GM12878 (cell line): ENCODE measurements at regions of chr16 and their contacts with region 1.

Region 1: DNA sequence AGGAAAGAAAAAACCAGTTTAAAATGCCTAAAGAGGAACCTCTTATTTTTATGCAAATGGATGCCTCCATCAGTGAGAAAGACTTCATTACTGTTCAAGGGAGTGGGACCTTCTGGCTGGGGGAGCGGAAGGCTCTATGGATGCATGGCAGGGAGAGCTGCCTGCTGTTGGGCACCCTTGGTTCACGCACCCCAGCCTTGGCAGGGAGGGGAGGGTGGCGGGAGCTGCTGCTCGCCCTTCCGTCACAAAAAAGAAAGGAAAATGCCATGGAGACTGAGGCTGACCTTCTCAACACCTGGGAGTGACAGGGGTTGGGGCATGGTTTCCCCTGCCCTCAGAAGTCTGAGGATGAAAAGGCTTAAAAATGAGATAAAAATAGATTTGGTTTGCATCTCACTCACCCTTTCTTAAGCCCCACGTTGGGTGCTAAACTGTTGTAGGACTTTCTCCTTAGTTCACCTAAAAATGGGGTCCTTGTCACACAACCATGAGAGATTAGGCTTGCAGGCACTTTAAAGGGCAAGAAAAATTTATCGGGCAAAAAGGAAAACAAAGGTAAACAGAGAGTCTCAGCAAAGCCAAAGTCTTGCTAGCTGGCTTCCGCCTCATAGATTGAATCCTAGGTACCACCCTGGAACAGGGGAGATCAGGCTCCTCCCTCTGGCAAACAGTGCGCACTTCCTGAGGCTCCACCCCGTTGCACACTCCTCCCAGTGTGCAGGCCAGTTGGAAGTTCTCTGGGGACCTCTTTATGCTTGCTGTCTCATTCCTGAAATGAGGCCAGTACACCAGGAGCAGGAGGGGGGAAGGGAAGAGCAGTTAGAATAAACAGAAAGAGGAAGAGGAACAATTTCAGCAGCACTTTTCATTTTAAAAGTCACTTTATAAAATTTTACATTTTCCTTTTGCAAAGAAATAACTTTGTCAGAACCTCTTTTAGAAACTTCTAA is 31.6 kb downstream of the PHKB start:
- DNase-seq: peak; percentile 76
- ATAC-seq: peak; percentile 95
- H3K4me3 ChIP-seq: peak overlapping the region; percentile 57
- H3K27ac ChIP-seq: peak overlapping the region; percentile 97
- H3K4me1 ChIP-seq: peaks cover 29% of the 10 kb centered on the region
- H3K27me3 ChIP-seq: no peaks in the 10 kb centered on the region
- CTCF ChIP-seq: no peak
- EP300 ChIP-seq: peak; percentile 55 to 61; a peak in 3 of 4 replicates
- POLR2A ChIP-seq: peak; percentile 58
- RAD21 ChIP-seq: no peak

Region 2: GRCh38 chr16:47467496-47467895 is 25.2 kb before region 1 on chr16:
- CTCF ChIA-PET with region 1: interaction called, 60 read pairs
- POLR2A ChIA-PET with region 1: interaction called, 38 read pairs
- RAD21 ChIA-PET with region 1: interaction called, 238 read pairs
- SMC1A ChIA-PET with region 1: interaction called, 254 read pairs
- in situ Hi-C with region 1: no loop called
- intact Hi-C with region 1: loop called (anchors 1 kb)
- DNase-seq: no peak
- ATAC-seq: no peak
- H3K4me3 ChIP-seq: no peak overlapping the region
- H3K27ac ChIP-seq: no peak overlapping the region
- H3K4me1 ChIP-seq: peaks cover 6% of the 10 kb centered on the region; the same call in 1 of the 2 replicates
- H3K27me3 ChIP-seq: no peaks in the 10 kb centered on the region
- CTCF ChIP-seq: no peak
- EP300 ChIP-seq: no peak
- POLR2A ChIP-seq: no peak
- RAD21 ChIP-seq: no peak

Region 3: GRCh38 chr16:47475786-47476185 is 16.9 kb before region 1 on chr16:
- CTCF ChIA-PET with region 1: interaction called, 31 read pairs
- POLR2A ChIA-PET with region 1: interaction called, 12 read pairs
- RAD21 ChIA-PET with region 1: interaction called, 238 read pairs
- SMC1A ChIA-PET with region 1: interaction called, 112 read pairs
- in situ Hi-C with region 1: no loop called
- intact Hi-C with region 1: no loop called
- DNase-seq: no peak
- ATAC-seq: no peak
- H3K4me3 ChIP-seq: no peak overlapping the region
- H3K27ac ChIP-seq: no peak overlapping the region
- H3K4me1 ChIP-seq: peaks cover 10% of the 10 kb centered on the region
- H3K27me3 ChIP-seq: no peaks in the 10 kb centered on the region
- CTCF ChIP-seq: no peak
- EP300 ChIP-seq: no peak
- POLR2A ChIP-seq: no peak
- RAD21 ChIP-seq: no peak

Region 4: GRCh38 chr16:47481698-47482374 is 10.9 kb before region 1 on chr16:
- CTCF ChIA-PET with region 1: interaction called, 31 read pairs
- POLR2A ChIA-PET with region 1: interaction called, 12 read pairs
- RAD21 ChIA-PET with region 1: interaction called, 59 read pairs
- SMC1A ChIA-PET with region 1: interaction called, 112 read pairs
- in situ Hi-C with region 1: no loop called
- intact Hi-C with region 1: no loop called
- DNase-seq: no peak
- ATAC-seq: peak; percentile 27
- H3K4me3 ChIP-seq: no peak overlapping the region
- H3K27ac ChIP-seq: no peak overlapping the region; the same call in 1 of the 2 replicates
- H3K4me1 ChIP-seq: peaks cover 23% of the 10 kb centered on the region
- H3K27me3 ChIP-seq: no peaks in the 10 kb centered on the region
- CTCF ChIP-seq: no peak
- EP300 ChIP-seq: no peak
- POLR2A ChIP-seq: no peak
- RAD21 ChIP-seq: no peak

Region 5: DNA sequence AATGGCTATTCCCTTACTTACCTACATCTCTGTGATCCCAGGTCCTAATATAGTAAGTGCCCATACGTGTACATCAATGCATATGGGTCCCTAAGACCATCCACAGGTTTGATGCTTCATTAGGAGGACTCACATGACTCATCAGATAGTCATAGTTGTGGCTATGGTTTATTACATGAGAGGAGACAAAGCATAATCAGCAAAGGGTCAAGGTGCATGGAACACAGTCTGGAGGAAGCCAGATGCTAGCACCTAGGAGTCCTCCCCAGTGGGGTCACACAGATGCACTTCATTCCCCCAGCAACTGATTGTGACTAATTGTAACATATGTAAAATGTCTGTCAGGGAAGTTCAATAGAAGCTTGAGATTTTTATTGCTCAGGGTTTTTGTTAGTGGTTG is 11.2 kb after region 1 on chr16:
- CTCF ChIA-PET with region 1: interaction called, 7 read pairs
- POLR2A ChIA-PET with region 1: interaction called, 14 read pairs
- RAD21 ChIA-PET with region 1: interaction called, 15 read pairs
- SMC1A ChIA-PET with region 1: interaction called, 42 read pairs
- in situ Hi-C with region 1: no loop called
- intact Hi-C with region 1: no loop called
- DNase-seq: no peak
- ATAC-seq: no peak
- H3K4me3 ChIP-seq: no peak overlapping the region
- H3K27ac ChIP-seq: no peak overlapping the region
- H3K4me1 ChIP-seq: no peaks in the 10 kb centered on the region
- H3K27me3 ChIP-seq: no peaks in the 10 kb centered on the region
- CTCF ChIP-seq: no peak
- EP300 ChIP-seq: no peak
- POLR2A ChIP-seq: no peak
- RAD21 ChIP-seq: no peak

Region 6: GRCh38 chr16:47523342-47524006 is 30.8 kb after region 1 on chr16:
- CTCF ChIA-PET with region 1: interaction called, 7 read pairs
- POLR2A ChIA-PET with region 1: interaction called, 7 read pairs
- RAD21 ChIA-PET with region 1: interaction called, 46 read pairs
- SMC1A ChIA-PET with region 1: interaction called, 45 read pairs
- in situ Hi-C with region 1: no loop called
- intact Hi-C with region 1: no loop called
- DNase-seq: peak; percentile 78
- ATAC-seq: peak; percentile 100
- H3K4me3 ChIP-seq: no peak overlapping the region
- H3K27ac ChIP-seq: peak overlapping the region; percentile 26
- H3K4me1 ChIP-seq: peaks cover 6% of the 10 kb centered on the region; the same call in 1 of the 2 replicates
- H3K27me3 ChIP-seq: no peaks in the 10 kb centered on the region
- CTCF ChIP-seq: no peak
- EP300 ChIP-seq: peak in 1 of 2 experiments; percentile 79; a peak in 1 of 4 replicates
- POLR2A ChIP-seq: no peak
- RAD21 ChIP-seq: 0 out of 2 replicates have a peak, but pooled peaks have one; percentile 13

Region 7: GRCh38 chr16:47581112-47581511 is 88.4 kb after region 1 on chr16:
- CTCF ChIA-PET with region 1: interaction called, 3 read pairs
- POLR2A ChIA-PET with region 1: no interaction called
- RAD21 ChIA-PET with region 1: interaction called, 5 read pairs
- SMC1A ChIA-PET with region 1: interaction called, 11 read pairs
- in situ Hi-C with region 1: no loop called
- intact Hi-C with region 1: no loop called
- DNase-seq: no peak
- ATAC-seq: no peak
- H3K4me3 ChIP-seq: no peak overlapping the region
- H3K27ac ChIP-seq: no peak overlapping the region
- H3K4me1 ChIP-seq: no peaks in the 10 kb centered on the region
- H3K27me3 ChIP-seq: no peaks in the 10 kb centered on the region
- CTCF ChIP-seq: no peak
- EP300 ChIP-seq: no peak
- POLR2A ChIP-seq: no peak
- RAD21 ChIP-seq: no peak